Colonic mucosa (tissue), 4 donors: ENCODE measurements at regions of chr1 and their contacts with region 1.

Region 1: GRCh38 chr1:174022080-174022975 is at the start of gene RC3H1:
- DNase-seq: peak; percentile 95
- H3K4me3 ChIP-seq: peak within 1 kb of the TSS; percentile 86
- H3K27ac ChIP-seq: peak within 1 kb of the TSS; percentile 93
- H3K4me1 ChIP-seq: peaks cover 8% of the 10 kb centered on the region
- H3K27me3 ChIP-seq: no peaks in the 10 kb centered on the region
- CTCF ChIP-seq: no peak
- total RNA-seq, gene RC3H1: 26.6 to 37.5 TPM

Region 2: DNA sequence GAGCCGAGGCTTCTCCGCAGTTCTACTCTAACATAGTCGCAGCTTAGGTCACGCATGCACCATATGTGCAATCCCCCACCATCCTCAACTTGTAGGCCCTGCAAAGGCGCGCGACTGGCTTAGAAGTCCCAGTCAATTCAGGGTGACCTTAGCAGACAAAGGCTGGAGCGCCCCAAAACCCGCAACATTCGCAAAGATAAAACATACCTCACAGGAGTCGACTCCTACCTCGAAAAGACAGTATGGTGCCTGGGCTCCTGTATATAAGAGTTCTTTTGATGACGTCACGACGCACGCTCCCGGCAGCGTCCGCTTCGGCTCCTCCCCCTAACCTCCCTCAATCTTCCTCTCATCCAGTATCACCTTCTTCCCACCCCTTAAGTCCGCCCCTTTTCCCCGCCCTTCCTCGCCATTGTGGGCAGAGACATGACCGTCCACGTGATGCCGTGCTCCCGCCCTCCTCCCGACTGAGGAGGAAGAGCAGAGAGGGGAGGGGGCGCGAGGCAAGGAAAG is 154.5 kb before region 1 on chr1 and contains the start of gene GAS5:
- intact Hi-C with region 1: loop called (anchors 5 kb)
- DNase-seq: peak; percentile 99
- H3K4me3 ChIP-seq: peak within 1 kb of the TSS; percentile 79
- H3K27ac ChIP-seq: peak within 1 kb of the TSS; percentile 96
- H3K4me1 ChIP-seq: peaks cover 5% of the 10 kb centered on the region
- H3K27me3 ChIP-seq: no peaks in the 10 kb centered on the region
- CTCF ChIP-seq: no peak
- total RNA-seq, gene GAS5: 207 to 247 TPM

Region 3: GRCh38 chr1:174159252-174160108 is 137.2 kb after region 1 on chr1 and contains the start of gene RABGAP1L:
- intact Hi-C with region 1: loop called (anchors 10 kb)
- DNase-seq: peak; percentile 94
- H3K4me3 ChIP-seq: peak within 1 kb of the TSS; percentile 96
- H3K27ac ChIP-seq: peak within 1 kb of the TSS; percentile 99
- H3K4me1 ChIP-seq: peaks cover 4% of the 10 kb centered on the region
- H3K27me3 ChIP-seq: no peaks in the 10 kb centered on the region
- CTCF ChIP-seq: no peak
- total RNA-seq, gene RABGAP1L: 50.3 to 87.0 TPM